Astrocyte of the cerebellum (primary cell): ENCODE measurements at regions of chr19 and their contacts with region 1.

Region 1: DNA sequence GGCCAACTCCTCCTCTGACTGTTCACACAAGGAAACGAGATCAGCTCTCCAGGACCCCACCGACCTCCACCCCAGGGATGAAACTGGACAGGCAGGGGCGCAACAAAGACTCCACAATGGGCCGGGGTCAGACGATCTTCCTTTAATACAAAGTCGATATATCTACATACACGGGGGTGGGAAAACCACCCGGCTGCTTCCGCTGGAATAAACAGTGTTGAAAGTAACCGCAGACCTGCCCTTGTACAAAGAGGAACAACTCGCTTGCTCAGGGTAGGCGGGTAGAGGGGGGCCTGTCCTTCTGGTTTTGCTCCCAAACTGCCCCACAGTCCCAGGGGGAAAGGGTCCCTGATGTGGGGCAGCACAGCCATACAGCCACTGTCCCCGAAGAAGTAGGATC is 135.2 kb downstream of the PTPRS start:
- DNase-seq: no peak
- H3K4me3 ChIP-seq: no peak overlapping the region
- CTCF ChIP-seq: no peak

Region 2: DNA sequence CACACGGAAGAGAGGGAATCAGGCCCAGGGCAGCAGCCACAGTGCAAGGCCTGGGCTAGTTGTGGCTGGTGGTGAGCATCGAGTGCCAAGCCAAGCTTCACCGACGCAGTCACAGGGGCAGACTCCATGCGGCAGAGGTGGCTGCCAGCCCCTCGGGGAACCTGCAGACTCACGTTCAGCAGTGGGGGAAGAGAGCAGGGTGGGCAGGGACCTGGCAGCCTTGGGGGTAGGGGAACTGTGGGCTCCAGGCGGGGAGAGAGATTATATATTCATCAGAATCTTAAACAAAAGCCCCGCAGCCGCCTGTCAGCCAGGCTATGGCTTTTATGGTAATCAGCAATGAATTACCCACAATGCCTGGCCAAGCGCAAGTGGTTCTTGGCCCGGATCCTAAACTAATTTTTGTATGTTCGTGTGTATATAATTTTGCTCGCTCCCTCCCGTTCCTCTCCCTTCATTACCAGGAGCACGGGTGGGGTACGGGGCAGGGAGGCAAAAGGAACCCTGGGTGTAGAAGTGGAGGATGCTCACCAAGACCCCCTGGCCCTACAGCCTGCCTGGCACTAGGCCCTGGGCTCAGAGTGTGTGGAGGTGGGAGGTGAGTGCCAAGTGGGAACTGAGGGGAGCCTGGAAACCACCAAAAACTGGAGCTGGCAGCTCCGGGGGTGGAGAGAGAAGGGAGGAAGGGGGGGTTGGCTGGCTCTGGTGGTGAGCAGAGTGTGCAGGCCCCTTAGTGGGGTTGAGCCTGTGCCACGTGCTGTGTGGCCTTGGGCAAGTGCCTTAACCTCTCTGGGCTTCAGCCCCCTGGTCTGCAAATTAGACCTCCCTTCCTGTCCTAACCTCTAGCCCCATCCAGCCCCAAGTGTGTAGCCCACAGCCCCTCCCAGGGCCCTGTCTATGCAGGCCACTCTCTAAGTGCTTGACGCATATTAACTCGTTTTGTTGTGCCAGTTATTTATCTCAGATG is 103.4 kb after region 1 on chr19:
- in situ Hi-C with region 1: loop called (anchors 5 kb)
- DNase-seq: peak; percentile 79
- H3K4me3 ChIP-seq: peak overlapping the region; percentile 7
- CTCF ChIP-seq: no peak